Naive thymus-derived CD4-positive, alpha-beta T cell (primary cell): ENCODE measurements at regions of chr2 and their contacts with region 1.

Region 1: GRCh38 chr2:37196320-37197195 is at the start of gene CEBPZOS:
- DNase-seq: peak; percentile 82 to 91 (median 88)
- ATAC-seq: peak; percentile 92
- H3K4me3 ChIP-seq: peak within 1 kb of the TSS; percentile 90
- H3K4me3 Mint-ChIP-seq: peak within 1 kb of the TSS; percentile 93 to 100 (median 99)
- H3K27ac ChIP-seq: peak within 1 kb of the TSS; percentile 82
- H3K27ac Mint-ChIP-seq: peak within 1 kb of the TSS; percentile 93 to 99 (median 99)
- H3K4me1 ChIP-seq: peaks cover 10 to 15% of the 10 kb centered on the region in 2 donors
- H3K4me1 Mint-ChIP-seq: peaks cover 14 to 47% (median 34%) of the 10 kb centered on the region in 7 donors
- H3K27me3 ChIP-seq: no peaks in the 10 kb centered on the region
- H3K27me3 Mint-ChIP-seq: peaks cover 0 to 5% (median 0%) of the 10 kb centered on the region in 5 donors
- total RNA-seq, gene CEBPZOS: 26.9 to 40.7 (median 40.4) TPM

Region 2: DNA sequence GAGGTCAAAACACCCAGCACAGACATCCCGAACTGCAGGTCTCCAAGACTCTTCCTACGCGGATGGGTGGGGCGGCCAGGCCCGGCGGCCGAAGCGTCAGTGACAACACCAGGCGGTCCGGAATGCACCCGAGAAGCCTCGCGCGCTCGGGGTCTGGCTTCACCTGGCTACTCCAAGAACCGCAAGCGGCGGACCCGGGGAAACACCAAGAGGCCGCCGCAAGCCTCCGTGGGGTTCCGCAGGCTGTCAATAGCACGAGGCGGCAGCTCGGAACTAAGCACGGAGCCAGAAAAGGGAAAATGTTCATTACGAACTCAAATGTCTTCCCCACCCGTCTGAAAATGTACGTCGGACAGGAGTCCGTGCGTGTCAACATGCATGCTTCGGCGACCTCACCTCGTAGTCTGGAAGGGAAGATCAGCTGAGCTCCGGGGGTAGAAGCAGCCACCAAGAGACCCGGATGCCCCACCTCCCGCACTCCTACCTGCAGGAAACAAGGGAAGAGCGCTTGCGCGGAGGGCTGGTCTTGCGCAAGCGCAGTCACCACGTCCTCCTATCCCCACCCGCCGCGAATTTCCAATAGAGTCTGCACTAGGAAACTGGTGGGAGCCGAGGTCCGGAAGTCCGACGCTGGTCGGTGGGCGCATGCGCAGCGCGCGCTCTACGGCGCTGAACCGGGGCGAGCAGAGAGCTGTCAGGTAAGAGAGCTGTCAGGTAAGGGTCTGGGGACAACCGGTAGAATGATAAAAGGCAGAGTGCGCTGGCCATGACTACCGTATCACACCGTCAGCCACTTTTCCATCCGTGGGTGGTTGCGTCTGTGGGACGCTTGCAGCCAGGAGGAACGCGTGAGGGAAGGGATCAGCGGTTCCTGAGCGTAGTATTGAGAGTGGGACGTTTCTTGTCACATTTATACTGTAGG is 112.4 kb before region 1 on chr2 and contains the starts of genes GPATCH11 and HEATR5B:
- CTCF ChIA-PET with region 1: no interaction called
- POLR2A ChIA-PET with region 1: interaction called, 10 read pairs
- intact Hi-C with region 1: loop called in 1 of 2 experiments (anchors 1 kb)
- DNase-seq: peak; percentile 76 to 94 (median 92)
- ATAC-seq: peak; percentile 87
- H3K4me3 ChIP-seq: peak within 1 kb of the TSS; percentile 74
- H3K4me3 Mint-ChIP-seq: peak within 1 kb of the TSS in 1 of 10 donors; percentile 64
- H3K27ac ChIP-seq: peak within 1 kb of the TSS; percentile 85
- H3K27ac Mint-ChIP-seq: no peak within 1 kb of the TSS
- H3K4me1 ChIP-seq: peaks cover 35 to 45% of the 10 kb centered on the region in 2 donors
- H3K4me1 Mint-ChIP-seq: peaks cover 8 to 62% (median 50%) of the 10 kb centered on the region in 7 donors
- H3K27me3 ChIP-seq: no peaks in the 10 kb centered on the region
- H3K27me3 Mint-ChIP-seq: no peaks in the 10 kb centered on the region
- total RNA-seq, gene GPATCH11: 6.0 to 19.0 (median 11.1) TPM
- total RNA-seq, gene HEATR5B: 25.2 to 50.5 (median 39.3) TPM

Region 3: DNA sequence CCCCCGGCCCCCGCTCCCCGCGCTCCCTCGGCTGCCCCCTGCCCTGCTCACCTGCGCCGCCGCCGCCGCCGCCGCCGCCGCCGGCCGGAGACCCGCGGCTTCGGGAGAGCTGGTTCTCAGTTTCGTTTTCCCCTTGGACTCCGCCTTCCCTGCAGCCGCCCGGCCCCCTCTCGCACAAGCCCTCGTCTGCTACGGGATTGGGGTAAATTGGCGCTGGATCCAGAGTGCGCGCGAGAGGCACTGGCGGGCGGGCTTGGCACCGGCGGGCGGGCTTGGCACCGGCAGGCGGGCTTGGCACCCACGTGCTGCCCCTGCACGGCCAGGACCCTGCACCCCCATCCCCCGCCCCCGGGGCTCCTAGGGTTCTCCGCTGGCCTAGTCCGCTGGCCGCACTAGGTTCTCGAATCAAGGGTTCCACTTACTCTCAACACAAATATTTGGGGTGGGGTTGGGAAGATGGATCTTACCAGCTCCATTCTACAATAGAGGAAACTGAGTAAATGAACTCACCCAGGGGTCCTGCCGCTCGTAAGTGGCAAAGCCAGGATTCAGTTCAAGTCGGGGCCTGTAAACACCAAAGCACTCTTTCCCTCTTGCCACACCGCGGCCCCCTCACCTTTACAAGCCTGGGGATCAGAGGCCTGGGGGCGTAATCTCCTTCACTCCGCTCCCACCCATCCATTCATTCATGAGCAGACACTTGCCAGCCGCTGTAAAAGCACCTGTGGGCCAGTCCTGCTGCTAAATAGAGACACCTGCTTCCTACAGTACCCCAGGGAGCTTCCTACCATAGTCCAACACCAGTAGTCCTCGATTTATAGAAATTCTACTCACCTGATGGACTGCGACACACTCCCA is 39.5 kb before region 1 on chr2 and contains the start of gene EIF2AK2:
- CTCF ChIA-PET with region 1: interaction called, 3 read pairs
- POLR2A ChIA-PET with region 1: interaction called, 15 read pairs
- intact Hi-C with region 1: loop called (anchors 1 kb)
- DNase-seq: peak; percentile 59 to 85 (median 80)
- ATAC-seq: peak; percentile 96
- H3K4me3 ChIP-seq: peak within 1 kb of the TSS; percentile 92
- H3K4me3 Mint-ChIP-seq: peak within 1 kb of the TSS; percentile 88 to 99 (median 94)
- H3K27ac ChIP-seq: peak within 1 kb of the TSS; percentile 81
- H3K27ac Mint-ChIP-seq: peak within 1 kb of the TSS; percentile 86 to 96 (median 92)
- H3K4me1 ChIP-seq: peaks cover 18 to 25% of the 10 kb centered on the region in 2 donors
- H3K4me1 Mint-ChIP-seq: peaks cover 29 to 57% (median 48%) of the 10 kb centered on the region in 7 donors
- H3K27me3 ChIP-seq: no peaks in the 10 kb centered on the region
- H3K27me3 Mint-ChIP-seq: peaks cover 0 to 4% (median 0%) of the 10 kb centered on the region in 5 donors
- total RNA-seq, gene EIF2AK2: 21.2 to 91.9 (median 24.2) TPM

Region 4: DNA sequence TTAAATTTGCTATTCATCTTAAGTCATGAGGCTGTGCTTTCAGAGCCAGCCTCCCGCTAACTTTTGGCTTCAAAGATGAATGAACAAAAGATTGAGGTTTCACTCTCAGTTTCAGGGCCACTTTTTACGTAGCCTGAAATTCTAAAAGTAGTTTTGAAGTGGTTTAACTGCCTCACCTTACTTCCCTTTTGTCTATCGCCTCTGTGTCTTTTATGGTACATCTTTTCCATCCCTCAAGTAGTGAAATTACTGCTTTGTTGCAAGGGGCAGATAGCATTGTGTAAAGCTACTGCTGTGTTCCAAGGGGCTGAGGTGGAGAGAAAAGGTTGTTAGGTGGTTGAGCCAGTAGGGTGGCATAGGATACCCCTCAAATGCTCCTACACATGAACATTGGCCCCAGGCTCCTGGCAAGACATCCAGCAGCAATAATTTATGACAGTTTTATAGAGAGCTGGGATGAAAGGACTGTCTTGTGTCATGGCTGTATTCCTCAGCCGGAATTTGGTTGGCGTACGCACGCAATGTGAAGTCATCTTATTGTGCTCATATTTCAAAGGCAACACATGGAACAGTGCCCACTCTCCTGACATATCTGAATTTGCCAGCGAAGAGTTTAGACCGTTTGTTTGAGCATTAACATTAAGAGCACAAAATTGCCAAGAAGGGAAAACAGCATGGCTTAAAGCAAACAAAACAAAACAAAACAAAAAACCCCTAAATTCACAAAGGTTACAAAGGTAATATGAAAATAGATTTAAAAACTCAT is 180.0 kb after region 1 on chr2:
- CTCF ChIA-PET with region 1: no interaction called
- POLR2A ChIA-PET with region 1: no interaction called
- intact Hi-C with region 1: loop called in 1 of 2 experiments (anchors 1 kb)
- DNase-seq: peak in 8 of 9 donors; percentile 27 to 69 (median 56)
- ATAC-seq: peak; percentile 86
- H3K4me3 ChIP-seq: no peak overlapping the region
- H3K4me3 Mint-ChIP-seq: peak overlapping the region in 9 of 10 donors; percentile 33 to 80 (median 63)
- H3K27ac ChIP-seq: no peak overlapping the region
- H3K27ac Mint-ChIP-seq: peak overlapping the region in 4 of 9 donors; percentile 16 to 65 (median 35)
- H3K4me1 ChIP-seq: peaks cover 13 to 17% of the 10 kb centered on the region in 2 donors
- H3K4me1 Mint-ChIP-seq: peaks cover 11 to 30% (median 17%) of the 10 kb centered on the region in 7 donors
- H3K27me3 ChIP-seq: peaks cover 0 to 6% of the 10 kb centered on the region in 2 donors
- H3K27me3 Mint-ChIP-seq: peaks cover 25 to 66% (median 53%) of the 10 kb centered on the region in 5 donors